ENCODE measurements at regions of chr7 and their contacts with region 1.

Region 1: GRCh38 chr7:134891262-134891695 is 95.0 kb upstream of the AGBL3 start:
- DNase-seq: peak; percentile 99
- H3K4me3 Mint-ChIP-seq: peak overlapping the region; percentile 73
- H3K27ac Mint-ChIP-seq: peak overlapping the region; percentile 75
- H3K4me1 Mint-ChIP-seq: peaks cover 58% of the 10 kb centered on the region
- H3K27me3 Mint-ChIP-seq: no peaks in the 10 kb centered on the region
- CTCF ChIP-seq: no peak

Region 2: GRCh38 chr7:134831862-134832261 is 59.4 kb before region 1 on chr7:
- CTCF ChIA-PET with region 1: no interaction called
- POLR2A ChIA-PET with region 1: no interaction called
- intact Hi-C with region 1: no loop called
- DNase-seq: no peak
- H3K4me3 Mint-ChIP-seq: no peak overlapping the region
- H3K27ac Mint-ChIP-seq: no peak overlapping the region
- H3K4me1 Mint-ChIP-seq: no peaks in the 10 kb centered on the region
- H3K27me3 Mint-ChIP-seq: no peaks in the 10 kb centered on the region
- CTCF ChIP-seq: no peak

Region 3: DNA sequence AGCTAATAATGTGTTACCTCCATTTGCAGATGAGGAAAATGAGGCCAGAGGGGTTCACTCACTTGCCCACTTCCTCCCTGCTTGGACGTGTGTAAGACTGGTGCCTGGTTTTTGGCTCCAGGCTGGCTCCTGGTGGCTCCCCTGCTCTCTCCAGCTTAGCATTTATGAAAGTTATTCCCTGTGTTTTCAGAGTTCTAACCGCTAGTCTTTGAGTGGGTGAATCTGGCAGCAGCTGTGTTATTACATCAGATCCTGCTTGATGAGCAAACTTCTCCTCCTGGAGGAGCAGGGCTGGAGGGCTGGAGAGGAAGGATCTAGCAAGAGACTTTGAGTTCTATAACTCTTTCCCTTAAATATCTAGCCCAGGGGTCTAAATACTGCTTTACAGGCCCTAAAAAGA is 14.1 kb after region 1 on chr7:
- CTCF ChIA-PET with region 1: interaction called, 6 read pairs
- POLR2A ChIA-PET with region 1: interaction called, 12 read pairs
- intact Hi-C with region 1: no loop called
- DNase-seq: peak; percentile 89
- H3K4me3 Mint-ChIP-seq: peak overlapping the region; percentile 24
- H3K27ac Mint-ChIP-seq: peak overlapping the region; percentile 73
- H3K4me1 Mint-ChIP-seq: peaks cover 58% of the 10 kb centered on the region
- H3K27me3 Mint-ChIP-seq: no peaks in the 10 kb centered on the region
- CTCF ChIP-seq: no peak